Activated B cell treated with CpG ODN at 0.5 μM for 24 hours (primary cell): ENCODE measurements at regions of chr17 and their contacts with region 1.

Region 1: GRCh38 chr17:7383742-7384488 is 3.0 kb downstream of the TNK1 start:
- DNase-seq: peak; percentile 82
- ATAC-seq: peak; percentile 98
- H3K4me3 Mint-ChIP-seq: peak overlapping the region; percentile 86
- H3K27ac Mint-ChIP-seq: peak overlapping the region; percentile 80
- H3K4me1 Mint-ChIP-seq: peaks cover 10% of the 10 kb centered on the region
- H3K27me3 Mint-ChIP-seq: peaks cover 29% of the 10 kb centered on the region
- CTCF ChIP-seq: no peak

Region 2: DNA sequence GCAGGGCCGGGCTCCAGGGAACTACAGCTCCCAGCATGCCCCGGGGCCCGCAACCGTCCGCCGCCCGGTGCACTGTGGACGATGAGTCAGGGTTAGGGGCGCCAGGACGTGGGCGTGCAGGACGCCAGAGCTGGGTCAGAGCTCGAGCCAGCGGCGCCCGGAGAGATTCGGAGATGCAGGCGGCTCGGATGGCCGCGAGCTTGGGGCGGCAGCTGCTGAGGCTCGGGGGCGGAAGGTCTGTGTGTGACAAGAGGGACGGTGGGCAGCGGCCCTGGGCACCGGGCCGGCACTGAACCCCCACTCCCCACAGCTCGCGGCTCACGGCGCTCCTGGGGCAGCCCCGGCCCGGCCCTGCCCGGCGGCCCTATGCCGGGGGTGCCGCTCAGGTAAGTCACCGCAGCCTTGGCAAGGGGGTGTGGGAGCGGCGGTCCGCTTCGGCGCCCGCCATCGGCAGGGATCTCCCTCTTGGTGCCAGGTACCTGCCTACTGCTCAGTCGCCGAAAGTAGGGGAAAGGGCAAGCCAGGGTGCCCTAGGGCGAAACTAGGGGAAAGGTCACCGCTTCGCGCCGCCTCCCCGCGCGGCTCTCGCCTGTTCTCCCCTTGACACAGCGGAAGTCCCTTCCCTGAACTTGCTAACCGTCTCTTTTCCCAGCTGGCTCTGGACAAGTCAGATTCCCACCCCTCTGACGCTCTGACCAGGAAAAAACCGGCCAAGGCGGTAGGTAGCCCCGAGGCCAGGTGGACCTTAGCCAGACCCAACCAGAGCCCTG is 163.9 kb before region 1 on chr17 and contains the starts of genes ACADVL and DLG4:
- CTCF ChIA-PET with region 1: no interaction called
- POLR2A ChIA-PET with region 1: no interaction called
- intact Hi-C with region 1: no loop called
- DNase-seq: peak; percentile 75
- ATAC-seq: peak; percentile 75
- H3K4me3 Mint-ChIP-seq: peak within 1 kb of the TSS; percentile 96
- H3K27ac Mint-ChIP-seq: peak within 1 kb of the TSS; percentile 91
- H3K4me1 Mint-ChIP-seq: peaks cover 53% of the 10 kb centered on the region
- H3K27me3 Mint-ChIP-seq: no peaks in the 10 kb centered on the region
- CTCF ChIP-seq: no peak
- total RNA-seq, gene ACADVL: 438 and 469 TPM in 2 replicates
- total RNA-seq, gene DLG4: 3.9 and 5.0 TPM in 2 replicates

Region 3: GRCh38 chr17:7306911-7307686 is 76.8 kb before region 1 on chr17 and contains the start of gene EIF5A:
- CTCF ChIA-PET with region 1: no interaction called
- POLR2A ChIA-PET with region 1: no interaction called
- intact Hi-C with region 1: no loop called
- DNase-seq: peak; percentile 98
- ATAC-seq: peak; percentile 72
- H3K4me3 Mint-ChIP-seq: peak within 1 kb of the TSS; percentile 96
- H3K27ac Mint-ChIP-seq: peak within 1 kb of the TSS; percentile 99
- H3K4me1 Mint-ChIP-seq: peaks cover 38% of the 10 kb centered on the region
- H3K27me3 Mint-ChIP-seq: no peaks in the 10 kb centered on the region
- CTCF ChIP-seq: no peak
- total RNA-seq, gene EIF5A: 656 and 664 TPM in 2 replicates

Region 4: GRCh38 chr17:7394452-7395191 is 10.7 kb after region 1 on chr17 and contains the start of gene PLSCR3:
- CTCF ChIA-PET with region 1: no interaction called
- POLR2A ChIA-PET with region 1: interaction called, 10 read pairs
- intact Hi-C with region 1: loop called (anchors 1 kb)
- DNase-seq: peak; percentile 94
- ATAC-seq: peak; percentile 88
- H3K4me3 Mint-ChIP-seq: peak within 1 kb of the TSS; percentile 91
- H3K27ac Mint-ChIP-seq: peak within 1 kb of the TSS; percentile 85
- H3K4me1 Mint-ChIP-seq: peaks cover 15% of the 10 kb centered on the region
- H3K27me3 Mint-ChIP-seq: no peaks in the 10 kb centered on the region
- CTCF ChIP-seq: no peak
- total RNA-seq, gene PLSCR3: 31.7 and 35.2 TPM in 2 replicates

Region 5: GRCh38 chr17:7403977-7404736 is 20.2 kb after region 1 on chr17 and contains the start of gene TMEM256:
- CTCF ChIA-PET with region 1: no interaction called
- POLR2A ChIA-PET with region 1: interaction called, 27 read pairs
- intact Hi-C with region 1: loop called (anchors 1 kb)
- DNase-seq: peak; percentile 82
- ATAC-seq: peak; percentile 89
- H3K4me3 Mint-ChIP-seq: peak within 1 kb of the TSS; percentile 97
- H3K27ac Mint-ChIP-seq: peak within 1 kb of the TSS; percentile 94
- H3K4me1 Mint-ChIP-seq: peaks cover 16% of the 10 kb centered on the region
- H3K27me3 Mint-ChIP-seq: peaks cover 12% of the 10 kb centered on the region
- CTCF ChIP-seq: no peak
- total RNA-seq, gene TMEM256: 98.2 and 117 TPM in 2 replicates

Region 6: DNA sequence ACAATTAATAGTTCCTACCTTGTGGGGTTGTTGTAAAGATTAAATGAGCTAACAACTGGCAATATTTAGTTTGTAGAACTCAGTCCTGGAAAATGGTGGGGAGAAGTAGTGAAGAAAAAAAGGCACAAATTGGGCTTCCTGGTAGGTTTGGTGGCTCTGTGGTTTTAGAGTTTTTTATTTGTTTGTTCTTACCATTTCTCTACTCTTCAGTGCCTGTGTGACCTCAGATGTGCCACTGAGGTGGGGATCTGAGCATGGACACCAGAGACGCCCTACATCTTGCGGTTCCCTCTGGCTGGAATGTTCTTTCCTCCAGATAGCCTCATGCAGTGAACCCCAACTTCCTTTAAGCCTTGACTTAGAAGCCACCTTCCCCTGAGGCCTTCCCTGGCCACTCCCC is 87.8 kb after region 1 on chr17:
- CTCF ChIA-PET with region 1: no interaction called
- POLR2A ChIA-PET with region 1: no interaction called
- intact Hi-C with region 1: no loop called
- DNase-seq: no peak
- ATAC-seq: no peak
- H3K4me3 Mint-ChIP-seq: no peak overlapping the region
- H3K27ac Mint-ChIP-seq: peak overlapping the region; percentile 61
- H3K4me1 Mint-ChIP-seq: peaks cover 47% of the 10 kb centered on the region
- H3K27me3 Mint-ChIP-seq: no peaks in the 10 kb centered on the region
- CTCF ChIP-seq: no peak